Dorsolateral prefrontal cortex (tissue), 120 donors: ENCODE measurements at regions of chr12 and their contacts with region 1.

Region 1: GRCh38 chr12:104137913-104138796 is at the start of gene NFYB:
- DNase-seq: peak; percentile 82 to 96 (median 94)
- H3K4me3 ChIP-seq: peak within 1 kb of the TSS; percentile 63 to 92 (median 82)
- H3K27ac ChIP-seq: peak within 1 kb of the TSS; percentile 18 to 97 (median 91)
- H3K27me3 ChIP-seq: no peaks in the 10 kb centered on the region
- CTCF ChIP-seq: peak in 6 of 56 donors; percentile 5 to 18 (median 10)
- total RNA-seq, gene NFYB: 23.1 to 43.8 (median 30.8) TPM

Region 2: GRCh38 chr12:103965590-103966504 is 172.3 kb before region 1 on chr12 and contains the start of gene TDG:
- intact Hi-C with region 1: loop called (anchors 5 kb)
- DNase-seq: peak; percentile 96 to 99 (median 98)
- H3K4me3 ChIP-seq: peak within 1 kb of the TSS; percentile 55 to 99 (median 89)
- H3K27ac ChIP-seq: peak within 1 kb of the TSS; percentile 65 to 98 (median 94)
- H3K27me3 ChIP-seq: no peaks in the 10 kb centered on the region
- CTCF ChIP-seq: peak in 47 of 56 donors; percentile 0 to 58 (median 32)
- total RNA-seq, gene TDG: 9.9 to 22.2 (median 15.5) TPM

Region 3: GRCh38 chr12:104286538-104287482 is 148.7 kb after region 1 on chr12:
- intact Hi-C with region 1: loop called (anchors 2 to 5 kb)
- DNase-seq: peak; percentile 76 to 90 (median 88)
- H3K4me3 ChIP-seq: peak overlapping the region; percentile 52 to 97 (median 81)
- H3K27ac ChIP-seq: peak overlapping the region; percentile 48 to 97 (median 91)
- H3K27me3 ChIP-seq: no peaks in the 10 kb centered on the region
- CTCF ChIP-seq: peak in 16 of 56 donors; percentile 4 to 39 (median 16)

Region 4: DNA sequence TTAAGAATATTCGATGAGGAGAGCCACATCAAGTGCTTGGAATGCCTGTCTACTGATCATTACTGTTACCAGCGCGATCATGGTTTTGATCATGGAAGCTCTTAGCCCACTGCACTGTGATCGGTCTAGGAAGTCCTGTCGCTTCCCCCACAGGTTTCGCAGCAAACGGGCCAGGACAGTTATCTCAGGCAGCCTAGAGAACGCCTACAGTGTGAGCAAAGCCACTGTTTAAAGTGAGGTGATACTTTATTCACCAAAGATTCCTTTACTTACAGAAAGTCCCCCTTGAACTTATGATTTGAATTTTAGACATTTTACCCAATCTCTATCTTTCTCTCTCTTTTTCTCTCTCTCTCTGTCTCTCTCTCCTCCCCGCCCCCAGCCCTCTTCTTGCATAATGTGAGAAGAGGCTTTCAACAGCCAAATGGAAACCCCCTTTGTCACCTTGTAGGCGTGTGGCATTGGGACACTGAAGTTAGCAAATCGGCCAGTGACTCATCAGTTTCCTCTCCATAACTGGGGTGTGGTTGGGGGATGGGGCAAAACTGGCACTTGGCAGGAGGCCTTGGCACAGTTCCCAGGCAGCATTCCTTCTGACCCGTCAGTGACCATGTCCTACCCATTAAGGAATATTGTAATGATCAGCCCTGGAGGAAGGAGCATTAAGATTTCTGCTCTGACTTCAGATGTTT is 533.4 kb after region 1 on chr12:
- intact Hi-C with region 1: loop called in 1 of 2 experiments (anchors 10 kb)
- DNase-seq: peak in 7 of 10 donors; percentile 23 to 73 (median 60)
- H3K4me3 ChIP-seq: no peak overlapping the region
- H3K27ac ChIP-seq: peak overlapping the region in 47 of 59 donors; percentile 7 to 98 (median 66)
- H3K27me3 ChIP-seq: no peaks in the 10 kb centered on the region
- CTCF ChIP-seq: no peak